ENCODE measurements at regions of chr6 and their contacts with region 1.

Region 1: DNA sequence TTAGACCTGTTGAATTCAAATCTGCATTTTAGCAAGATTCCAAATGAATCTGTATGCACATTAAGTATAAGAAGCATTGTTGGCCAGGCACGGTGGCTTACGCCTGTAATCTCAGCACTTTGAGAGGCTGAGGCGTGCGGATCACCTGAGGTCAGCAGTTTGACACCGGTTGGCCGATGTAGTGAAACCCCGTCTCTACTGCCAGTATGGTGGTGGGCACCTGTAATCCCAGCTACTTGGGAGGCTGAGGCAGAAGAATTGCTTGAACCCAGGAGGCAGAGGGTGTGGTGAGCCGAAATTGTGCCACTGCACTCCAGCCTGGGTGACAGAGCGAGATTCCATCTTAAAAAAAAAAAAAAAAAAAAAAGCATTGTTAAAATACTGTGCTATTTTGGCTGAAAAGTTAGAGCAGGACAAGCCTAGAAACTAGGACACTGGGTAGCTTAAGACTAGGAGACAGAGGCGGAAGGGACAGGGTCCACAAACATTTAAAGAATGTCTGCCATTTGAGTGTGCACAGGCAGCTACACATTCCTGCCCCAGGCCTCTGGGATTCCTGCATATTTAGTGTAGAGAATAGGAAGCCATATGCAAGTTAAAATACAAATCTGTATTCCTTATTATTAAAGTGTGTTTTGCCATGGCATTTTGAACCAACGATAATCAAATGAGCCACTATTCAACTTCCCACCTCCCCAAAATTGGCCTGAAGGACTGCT is 45.1 kb upstream of the EEF1A1 start:
- DNase-seq: no peak
- ATAC-seq: no peak
- H3K4me3 ChIP-seq: no peak overlapping the region
- H3K4me3 Mint-ChIP-seq: no peak overlapping the region
- H3K27ac ChIP-seq: no peak overlapping the region
- H3K27ac Mint-ChIP-seq: no peak overlapping the region
- H3K4me1 ChIP-seq: no peaks in the 10 kb centered on the region
- H3K4me1 Mint-ChIP-seq: peaks cover 0 to 3% (median 0%) of the 10 kb centered on the region in 7 donors
- H3K27me3 ChIP-seq: no peaks in the 10 kb centered on the region
- H3K27me3 Mint-ChIP-seq: peaks cover 0 to 4% (median 0%) of the 10 kb centered on the region in 5 donors

Region 2: DNA sequence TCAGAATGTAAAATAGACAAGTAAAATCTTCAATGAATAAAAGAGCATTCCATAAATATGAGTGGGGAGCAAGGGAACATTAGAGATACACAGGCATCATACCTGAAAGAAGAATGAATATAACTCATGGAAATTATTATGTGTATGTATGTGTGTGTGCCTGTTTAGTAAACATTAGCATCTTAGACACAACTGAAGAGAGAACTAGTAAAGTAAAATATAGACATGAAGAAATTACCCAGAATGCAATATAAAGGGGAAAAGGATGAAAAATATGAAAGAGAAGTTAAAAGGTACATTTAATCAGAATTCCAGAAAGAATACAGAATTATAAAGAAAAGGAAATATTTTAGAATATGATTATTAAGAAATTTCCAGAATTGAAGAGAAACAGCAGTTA is 679.8 kb before region 1 on chr6:
- CTCF ChIA-PET with region 1: no interaction called
- POLR2A ChIA-PET with region 1: no interaction called
- intact Hi-C with region 1: no loop called
- DNase-seq: no peak
- ATAC-seq: no peak
- H3K4me3 ChIP-seq: no peak overlapping the region
- H3K4me3 Mint-ChIP-seq: no peak overlapping the region
- H3K27ac ChIP-seq: no peak overlapping the region
- H3K27ac Mint-ChIP-seq: no peak overlapping the region
- H3K4me1 ChIP-seq: no peaks in the 10 kb centered on the region
- H3K4me1 Mint-ChIP-seq: peaks cover 0 to 6% (median 0%) of the 10 kb centered on the region in 7 donors
- H3K27me3 ChIP-seq: no peaks in the 10 kb centered on the region
- H3K27me3 Mint-ChIP-seq: no peaks in the 10 kb centered on the region

Region 3: GRCh38 chr6:73580247-73581149 is 14.6 kb after region 1 on chr6:
- CTCF ChIA-PET with region 1: no interaction called
- POLR2A ChIA-PET with region 1: interaction called, 3 read pairs
- intact Hi-C with region 1: loop called in 1 of 2 experiments (anchors 2 kb)
- DNase-seq: peak in 8 of 9 donors; percentile 9 to 69 (median 22)
- ATAC-seq: peak; percentile 90
- H3K4me3 ChIP-seq: peak overlapping the region; percentile 20
- H3K4me3 Mint-ChIP-seq: peak overlapping the region; percentile 33 to 77 (median 73)
- H3K27ac ChIP-seq: peak overlapping the region; percentile 48
- H3K27ac Mint-ChIP-seq: peak overlapping the region; percentile 70 to 95 (median 89)
- H3K4me1 ChIP-seq: peaks cover 12 to 24% of the 10 kb centered on the region in 2 donors
- H3K4me1 Mint-ChIP-seq: peaks cover 8 to 26% (median 17%) of the 10 kb centered on the region in 7 donors
- H3K27me3 ChIP-seq: no peaks in the 10 kb centered on the region
- H3K27me3 Mint-ChIP-seq: no peaks in the 10 kb centered on the region